Naive thymus-derived CD4-positive, alpha-beta T cell (primary cell): ENCODE measurements at regions of chr4 and their contacts with region 1.

Region 1: GRCh38 chr4:40149960-40150385 is 46.9 kb upstream of the RHOH start:
- DNase-seq: peak; percentile 28 to 85 (median 77)
- ATAC-seq: peak; percentile 98
- H3K4me3 ChIP-seq: no peak overlapping the region
- H3K4me3 Mint-ChIP-seq: peak overlapping the region in 6 of 10 donors; percentile 11 to 64 (median 44)
- H3K27ac ChIP-seq: peak overlapping the region; percentile 0
- H3K27ac Mint-ChIP-seq: peak overlapping the region; percentile 62 to 94 (median 89)
- H3K4me1 ChIP-seq: peaks cover 4 to 42% of the 10 kb centered on the region in 2 donors
- H3K4me1 Mint-ChIP-seq: peaks cover 2 to 52% (median 44%) of the 10 kb centered on the region in 7 donors
- H3K27me3 ChIP-seq: no peaks in the 10 kb centered on the region
- H3K27me3 Mint-ChIP-seq: no peaks in the 10 kb centered on the region

Region 2: DNA sequence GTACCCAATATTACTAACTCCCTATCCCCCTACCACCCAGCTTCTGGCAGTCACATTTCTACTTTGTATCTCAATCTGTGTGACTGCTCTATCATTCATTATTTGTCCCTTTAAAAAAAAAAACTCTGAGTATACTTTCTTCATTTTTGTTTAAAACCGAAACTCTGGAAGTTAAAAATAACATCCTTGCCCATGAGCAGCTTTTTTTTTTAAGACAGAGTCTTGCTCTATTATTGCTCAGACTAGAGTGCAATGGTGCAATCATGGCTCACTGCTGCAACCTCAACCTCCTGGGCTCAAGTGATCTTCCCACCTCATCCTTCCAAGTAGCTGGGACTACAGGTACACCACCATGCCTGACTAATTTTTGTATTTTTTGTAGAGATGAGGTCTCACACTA is 436.3 kb before region 1 on chr4:
- CTCF ChIA-PET with region 1: no interaction called
- POLR2A ChIA-PET with region 1: no interaction called
- intact Hi-C with region 1: no loop called
- DNase-seq: no peak
- ATAC-seq: no peak
- H3K4me3 ChIP-seq: no peak overlapping the region
- H3K4me3 Mint-ChIP-seq: no peak overlapping the region
- H3K27ac ChIP-seq: no peak overlapping the region
- H3K27ac Mint-ChIP-seq: peak overlapping the region in 1 of 9 donors; percentile 5
- H3K4me1 ChIP-seq: peaks cover 6% of the 10 kb centered on the region in 2 donors
- H3K4me1 Mint-ChIP-seq: peaks cover 21 to 65% (median 54%) of the 10 kb centered on the region in 7 donors
- H3K27me3 ChIP-seq: no peaks in the 10 kb centered on the region
- H3K27me3 Mint-ChIP-seq: no peaks in the 10 kb centered on the region

Region 3: DNA sequence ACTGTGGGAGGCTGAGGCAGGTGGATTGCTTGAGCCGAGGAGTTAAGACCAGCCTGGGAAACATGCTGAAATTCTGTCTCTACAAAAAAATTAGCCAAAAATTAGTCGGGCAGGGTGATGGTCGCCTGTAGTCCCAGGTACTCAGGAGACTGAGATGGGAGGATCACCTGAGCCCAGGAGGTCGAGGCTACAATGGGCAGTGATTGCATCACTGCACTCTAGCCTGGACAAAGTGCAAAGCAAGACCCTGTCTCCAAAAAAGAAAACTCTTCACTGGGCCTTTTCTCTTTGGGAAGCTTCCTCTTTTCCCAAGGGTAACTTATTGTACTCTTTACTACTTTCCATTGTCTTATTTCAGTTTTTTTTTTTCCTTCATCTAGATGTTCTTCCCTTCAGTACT is 363.1 kb before region 1 on chr4:
- CTCF ChIA-PET with region 1: no interaction called
- POLR2A ChIA-PET with region 1: no interaction called
- intact Hi-C with region 1: no loop called
- DNase-seq: no peak
- ATAC-seq: no peak
- H3K4me3 ChIP-seq: no peak overlapping the region
- H3K4me3 Mint-ChIP-seq: no peak overlapping the region
- H3K27ac ChIP-seq: no peak overlapping the region
- H3K27ac Mint-ChIP-seq: peak overlapping the region in 2 of 9 donors; percentile 18 to 41
- H3K4me1 ChIP-seq: no peaks in the 10 kb centered on the region
- H3K4me1 Mint-ChIP-seq: peaks cover 0 to 2% (median 0%) of the 10 kb centered on the region in 7 donors
- H3K27me3 ChIP-seq: no peaks in the 10 kb centered on the region
- H3K27me3 Mint-ChIP-seq: no peaks in the 10 kb centered on the region

Region 4: DNA sequence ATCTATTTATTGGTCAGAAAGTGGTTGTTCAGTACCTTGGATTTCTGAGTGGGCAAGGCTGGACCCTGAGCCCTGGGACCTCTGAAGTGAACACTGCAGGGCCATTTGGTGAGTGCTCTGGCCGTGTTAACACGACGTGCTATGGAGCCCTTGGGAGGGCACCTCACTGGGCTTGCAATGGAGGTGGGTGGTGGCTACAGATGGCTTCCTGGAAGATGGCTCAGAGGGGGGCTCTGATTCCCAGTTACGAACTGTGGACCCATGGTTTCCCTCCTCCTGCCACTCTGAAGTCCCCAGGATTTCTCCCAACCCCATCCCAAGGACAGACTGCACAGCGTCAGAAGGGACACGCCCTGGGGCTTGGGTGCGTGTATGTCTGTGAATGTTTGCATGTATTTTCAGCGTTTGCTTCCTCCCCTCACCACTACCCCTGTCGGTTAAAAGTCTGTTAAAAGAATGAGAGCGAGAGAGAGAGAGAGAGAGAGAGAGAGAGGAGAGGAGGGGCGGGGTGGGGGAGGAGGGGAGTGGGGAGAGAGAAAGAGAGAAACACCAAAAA is 43.1 kb after region 1 on chr4:
- CTCF ChIA-PET with region 1: interaction called, 7 read pairs
- POLR2A ChIA-PET with region 1: interaction called, 47 read pairs
- intact Hi-C with region 1: loop called (anchors 1 kb)
- DNase-seq: peak in 8 of 9 donors; percentile 41 to 80 (median 74)
- ATAC-seq: peak; percentile 44
- H3K4me3 ChIP-seq: peak overlapping the region; percentile 61
- H3K4me3 Mint-ChIP-seq: peak overlapping the region; percentile 96 to 100 (median 99)
- H3K27ac ChIP-seq: peak overlapping the region; percentile 100
- H3K27ac Mint-ChIP-seq: peak overlapping the region; percentile 93 to 100 (median 99)
- H3K4me1 ChIP-seq: peaks cover 23 to 47% of the 10 kb centered on the region in 2 donors
- H3K4me1 Mint-ChIP-seq: peaks cover 47 to 80% (median 65%) of the 10 kb centered on the region in 7 donors
- H3K27me3 ChIP-seq: no peaks in the 10 kb centered on the region
- H3K27me3 Mint-ChIP-seq: peaks cover 0 to 4% (median 0%) of the 10 kb centered on the region in 5 donors

Region 5: GRCh38 chr4:40228497-40229365 is 78.8 kb after region 1 on chr4:
- CTCF ChIA-PET with region 1: interaction called, 11 read pairs
- POLR2A ChIA-PET with region 1: interaction called, 3 read pairs
- intact Hi-C with region 1: loop called in 1 of 2 experiments (anchors 1 kb)
- DNase-seq: peak in 1 of 9 donors; percentile 23
- ATAC-seq: no peak
- H3K4me3 ChIP-seq: peak overlapping the region; percentile 21
- H3K4me3 Mint-ChIP-seq: peak overlapping the region; percentile 74 to 87 (median 81)
- H3K27ac ChIP-seq: peak overlapping the region; percentile 74
- H3K27ac Mint-ChIP-seq: peak overlapping the region; percentile 87 to 99 (median 97)
- H3K4me1 ChIP-seq: peaks cover 86 to 98% of the 10 kb centered on the region in 2 donors
- H3K4me1 Mint-ChIP-seq: peaks cover 58 to 100% (median 90%) of the 10 kb centered on the region in 7 donors
- H3K27me3 ChIP-seq: no peaks in the 10 kb centered on the region
- H3K27me3 Mint-ChIP-seq: no peaks in the 10 kb centered on the region

Region 6: GRCh38 chr4:40247350-40247749 is 97.4 kb after region 1 on chr4:
- CTCF ChIA-PET with region 1: interaction called, 4 read pairs
- POLR2A ChIA-PET with region 1: interaction called, 5 read pairs
- intact Hi-C with region 1: loop called (anchors 1 to 5 kb)
- DNase-seq: peak in 7 of 9 donors; percentile 68 to 75 (median 73)
- ATAC-seq: peak; percentile 83
- H3K4me3 ChIP-seq: peak overlapping the region; percentile 14
- H3K4me3 Mint-ChIP-seq: peak overlapping the region; percentile 37 to 83 (median 69)
- H3K27ac ChIP-seq: peak overlapping the region; percentile 78
- H3K27ac Mint-ChIP-seq: peak overlapping the region; percentile 84 to 99 (median 96)
- H3K4me1 ChIP-seq: peaks cover 61 to 82% of the 10 kb centered on the region in 2 donors
- H3K4me1 Mint-ChIP-seq: peaks cover 53 to 93% (median 84%) of the 10 kb centered on the region in 7 donors
- H3K27me3 ChIP-seq: no peaks in the 10 kb centered on the region
- H3K27me3 Mint-ChIP-seq: no peaks in the 10 kb centered on the region

Region 7: GRCh38 chr4:40301603-40302002 is 151.6 kb after region 1 on chr4:
- CTCF ChIA-PET with region 1: interaction called, 63 read pairs
- POLR2A ChIA-PET with region 1: interaction called, 4 read pairs
- intact Hi-C with region 1: loop called in 1 of 2 experiments (anchors 2 kb)
- DNase-seq: peak in 8 of 9 donors; percentile 36 to 96 (median 92)
- ATAC-seq: peak; percentile 92
- H3K4me3 ChIP-seq: peak overlapping the region; percentile 17
- H3K4me3 Mint-ChIP-seq: peak overlapping the region; percentile 56 to 88 (median 76)
- H3K27ac ChIP-seq: peak overlapping the region; percentile 74
- H3K27ac Mint-ChIP-seq: peak overlapping the region in 8 of 9 donors; percentile 94 to 99 (median 98)
- H3K4me1 ChIP-seq: peaks cover 87 to 90% of the 10 kb centered on the region in 2 donors
- H3K4me1 Mint-ChIP-seq: peaks cover 60 to 92% (median 82%) of the 10 kb centered on the region in 7 donors
- H3K27me3 ChIP-seq: no peaks in the 10 kb centered on the region
- H3K27me3 Mint-ChIP-seq: no peaks in the 10 kb centered on the region

Region 8: DNA sequence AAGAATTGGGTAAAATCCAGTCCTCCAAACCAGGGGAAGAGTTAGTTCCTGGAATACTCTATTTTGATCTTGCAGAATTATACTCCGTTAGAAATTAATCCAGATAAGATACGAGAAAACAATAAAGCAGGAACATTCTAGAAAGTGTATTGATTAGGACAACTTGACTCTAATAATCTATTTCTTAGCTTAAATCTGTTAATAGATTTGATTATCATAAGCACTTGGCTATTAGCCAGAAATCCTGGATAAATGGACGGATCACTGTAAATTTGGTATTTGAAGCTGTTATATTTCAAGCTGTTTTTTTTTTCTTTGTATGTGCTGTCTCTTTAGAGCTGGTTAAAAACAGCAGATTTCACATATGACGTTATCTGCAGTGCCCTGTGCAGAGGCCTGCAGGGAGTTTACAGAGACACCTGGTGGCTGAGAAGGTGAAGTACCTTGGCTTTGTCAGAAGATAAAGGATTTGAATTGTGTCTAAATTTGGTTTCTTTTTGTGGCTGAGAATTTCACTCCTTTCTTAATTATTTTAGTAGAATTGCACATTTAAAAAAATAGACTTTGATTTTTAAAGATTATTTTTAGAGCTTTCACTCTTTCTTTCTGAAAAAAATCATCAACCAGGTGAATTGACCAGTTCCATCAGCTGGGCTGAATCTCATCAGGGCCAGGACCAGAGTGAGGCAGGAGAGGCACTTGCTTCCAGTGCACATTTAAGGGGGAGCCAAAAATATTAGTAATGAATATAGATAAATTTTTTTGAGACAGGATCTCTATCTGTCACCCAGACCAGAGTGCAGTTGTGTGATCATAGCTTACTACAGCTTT is 175.4 kb after region 1 on chr4:
- CTCF ChIA-PET with region 1: interaction called, 19 read pairs
- POLR2A ChIA-PET with region 1: interaction called, 6 read pairs
- intact Hi-C with region 1: loop called (anchors 1 kb)
- DNase-seq: peak in 7 of 9 donors; percentile 70 to 85 (median 82)
- ATAC-seq: peak; percentile 100
- H3K4me3 ChIP-seq: no peak overlapping the region
- H3K4me3 Mint-ChIP-seq: peak overlapping the region in 4 of 10 donors; percentile 0 to 48 (median 14)
- H3K27ac ChIP-seq: peak overlapping the region; percentile 45
- H3K27ac Mint-ChIP-seq: peak overlapping the region in 8 of 9 donors; percentile 25 to 87 (median 64)
- H3K4me1 ChIP-seq: peaks cover 0 to 8% of the 10 kb centered on the region in 2 donors
- H3K4me1 Mint-ChIP-seq: peaks cover 13 to 40% (median 35%) of the 10 kb centered on the region in 7 donors
- H3K27me3 ChIP-seq: no peaks in the 10 kb centered on the region
- H3K27me3 Mint-ChIP-seq: peaks cover 0 to 7% (median 4%) of the 10 kb centered on the region in 5 donors

Region 9: GRCh38 chr4:40719008-40719623 is 569.1 kb after region 1 on chr4:
- CTCF ChIA-PET with region 1: no interaction called
- POLR2A ChIA-PET with region 1: no interaction called
- intact Hi-C with region 1: loop called (anchors 2 to 5 kb)
- DNase-seq: peak in 1 of 9 donors; percentile 39
- ATAC-seq: no peak
- H3K4me3 ChIP-seq: no peak overlapping the region
- H3K4me3 Mint-ChIP-seq: no peak overlapping the region
- H3K27ac ChIP-seq: no peak overlapping the region
- H3K27ac Mint-ChIP-seq: peak overlapping the region in 1 of 9 donors; percentile 36
- H3K4me1 ChIP-seq: peaks cover 0 to 13% of the 10 kb centered on the region in 2 donors
- H3K4me1 Mint-ChIP-seq: peaks cover 0 to 33% (median 0%) of the 10 kb centered on the region in 7 donors
- H3K27me3 ChIP-seq: no peaks in the 10 kb centered on the region
- H3K27me3 Mint-ChIP-seq: no peaks in the 10 kb centered on the region